ENCODE measurements at regions of chr1 and their contacts with region 1.

Region 1: GRCh38 chr1:42853116-42853884 is 6.9 kb downstream of the ZNF691 start:
- DNase-seq: no peak
- ATAC-seq: 0 out of 2 replicates have a peak, but pooled peaks have one; percentile 30
- H3K4me3 ChIP-seq: no peak overlapping the region
- H3K27ac ChIP-seq: no peak overlapping the region
- H3K4me1 ChIP-seq: no peaks in the 10 kb centered on the region
- H3K27me3 ChIP-seq: no peaks in the 10 kb centered on the region
- CTCF ChIP-seq: no peak

Region 2: GRCh38 chr1:42720868-42721267 is 132.4 kb before region 1 on chr1:
- CTCF ChIA-PET with region 1: no interaction called
- POLR2A ChIA-PET with region 1: interaction called, 12 read pairs
- in situ Hi-C with region 1: no loop called
- intact Hi-C with region 1: no loop called
- DNase-seq: no peak
- ATAC-seq: no peak
- H3K4me3 ChIP-seq: no peak overlapping the region
- H3K27ac ChIP-seq: no peak overlapping the region
- H3K4me1 ChIP-seq: no peaks in the 10 kb centered on the region
- H3K27me3 ChIP-seq: no peaks in the 10 kb centered on the region
- CTCF ChIP-seq: no peak

Measured in Panc1 (cell line).